Naive thymus-derived CD8-positive, alpha-beta T cell (primary cell): ENCODE measurements at regions of chr17 and their contacts with region 1.

Region 1: GRCh38 chr17:45051060-45051719 is at the start of gene DCAKD:
- DNase-seq: peak; percentile 79 to 92 (median 86)
- ATAC-seq: peak; percentile 88 to 94
- H3K4me3 Mint-ChIP-seq: peak within 1 kb of the TSS; percentile 87 to 97 (median 92)
- H3K27ac Mint-ChIP-seq: peak within 1 kb of the TSS; percentile 90 to 99 (median 97)
- H3K4me1 Mint-ChIP-seq: peaks cover 10 to 49% (median 44%) of the 10 kb centered on the region in 4 donors
- H3K27me3 Mint-ChIP-seq: no peaks in the 10 kb centered on the region
- polyA plus RNA-seq, gene DCAKD: 13.1 to 16.1 (median 16.0) TPM

Region 2: DNA sequence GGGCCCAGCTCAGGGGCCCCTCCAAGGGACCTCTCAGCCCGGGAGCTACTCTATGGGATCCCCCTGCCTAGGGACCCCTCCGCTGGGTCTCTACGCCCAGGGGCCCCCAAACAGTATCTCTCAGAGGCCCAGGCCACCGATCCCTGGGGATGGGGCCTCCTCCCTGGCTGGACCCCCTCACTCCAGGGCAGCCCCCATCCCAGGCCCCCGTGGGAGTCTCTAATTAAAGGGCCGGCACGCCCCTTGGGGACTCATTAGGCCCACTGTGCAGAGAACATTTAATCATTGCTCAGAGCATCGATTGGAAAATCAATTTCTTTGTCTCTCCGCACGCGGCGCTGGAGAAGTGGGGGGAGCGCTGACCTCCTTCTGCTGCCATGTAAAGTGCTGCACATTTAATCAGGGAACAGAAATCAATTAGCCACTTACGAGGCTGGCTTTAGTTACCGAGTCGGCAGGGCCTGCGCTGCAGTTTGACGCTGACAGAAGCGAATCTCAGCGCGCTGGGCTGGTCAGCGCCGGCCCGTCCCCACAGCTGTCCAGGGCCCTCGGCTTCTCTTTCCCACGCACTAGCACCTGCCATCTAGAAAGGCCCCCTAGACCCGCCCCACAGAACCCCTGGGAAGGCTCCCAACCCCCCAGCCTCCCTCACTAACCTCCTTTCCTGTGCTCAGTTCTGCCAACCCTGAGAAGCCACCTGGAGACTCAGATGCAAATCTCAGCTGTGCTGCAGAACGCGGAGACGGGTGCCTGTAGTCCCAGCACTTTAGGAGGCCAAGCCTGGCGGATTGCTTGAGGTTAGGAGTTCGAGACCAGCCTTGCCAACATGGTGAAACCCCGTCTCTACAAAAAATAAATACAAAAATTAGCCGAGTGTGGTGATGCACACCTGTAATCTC is 62.9 kb before region 1 on chr17:
- POLR2A ChIA-PET with region 1: no interaction called
- DNase-seq: no peak
- ATAC-seq: no peak
- H3K4me3 Mint-ChIP-seq: peak overlapping the region in 5 of 10 donors; percentile 10 to 73 (median 13)
- H3K27ac Mint-ChIP-seq: no peak overlapping the region
- H3K4me1 Mint-ChIP-seq: peaks cover 4 to 19% (median 12%) of the 10 kb centered on the region in 4 donors
- H3K27me3 Mint-ChIP-seq: peaks cover 12 to 46% (median 32%) of the 10 kb centered on the region in 5 donors

Region 3: DNA sequence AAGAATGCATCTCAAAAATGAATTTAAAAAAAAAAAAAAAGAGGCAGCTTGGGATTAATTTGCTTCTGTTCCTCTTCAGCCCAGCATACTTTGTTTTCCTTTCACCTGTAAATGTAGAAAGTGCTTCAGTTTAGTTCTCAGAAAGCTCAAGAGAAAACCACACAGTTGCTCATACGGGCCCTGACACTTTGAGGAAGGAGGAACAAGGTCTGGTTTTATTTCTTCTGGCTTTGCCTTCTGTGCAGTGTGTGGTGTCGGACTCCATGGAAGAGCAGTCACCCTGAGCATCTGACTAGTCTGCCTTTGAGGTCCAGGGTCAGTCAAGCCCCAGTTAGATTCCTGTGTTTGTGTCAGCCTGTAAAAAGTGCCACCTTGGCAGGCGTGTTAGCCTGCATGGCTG is 37.6 kb after region 1 on chr17:
- POLR2A ChIA-PET with region 1: no interaction called
- DNase-seq: no peak
- ATAC-seq: no peak
- H3K4me3 Mint-ChIP-seq: no peak overlapping the region
- H3K27ac Mint-ChIP-seq: peak overlapping the region in 3 of 10 donors; percentile 29 to 43 (median 42)
- H3K4me1 Mint-ChIP-seq: peaks cover 0 to 3% (median 0%) of the 10 kb centered on the region in 4 donors
- H3K27me3 Mint-ChIP-seq: no peaks in the 10 kb centered on the region

Region 4: DNA sequence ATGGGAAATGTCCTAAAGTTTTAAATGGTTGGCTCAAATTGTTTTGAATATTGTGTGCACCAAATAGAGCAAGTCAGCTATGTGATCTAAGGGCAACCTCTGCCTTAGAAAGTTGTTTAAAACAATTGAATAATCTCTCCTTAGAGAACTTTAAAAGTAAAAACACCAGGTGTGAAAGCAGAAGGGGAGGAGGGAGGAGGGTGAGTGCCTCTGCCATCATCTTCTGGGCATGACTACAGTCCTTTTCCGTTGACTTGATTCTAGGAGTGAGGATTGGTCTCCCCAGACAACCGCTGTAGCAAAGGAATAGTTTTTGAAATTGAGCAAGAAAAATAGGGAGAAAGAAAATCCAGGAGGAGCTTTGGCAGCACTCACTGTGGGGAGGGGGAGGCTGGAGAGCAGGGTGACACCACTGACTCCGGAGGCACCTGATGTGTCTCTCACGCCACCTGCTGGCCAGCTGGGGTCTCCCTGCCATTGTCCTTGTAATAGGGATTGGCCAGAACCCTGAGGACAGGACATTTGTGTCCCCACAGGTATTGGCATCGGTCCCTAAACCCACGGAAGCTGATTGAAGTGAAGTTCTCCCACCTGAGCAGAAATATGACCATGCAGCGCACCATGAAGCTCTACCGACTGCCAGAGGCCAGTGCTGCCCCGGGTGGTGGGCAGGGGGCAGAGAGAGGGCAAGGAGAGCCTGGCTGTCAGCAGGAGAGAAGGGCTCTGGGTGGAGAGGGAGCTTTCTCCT is 47.9 kb after region 1 on chr17:
- POLR2A ChIA-PET with region 1: interaction called, 10 read pairs
- DNase-seq: peak; percentile 51 to 85 (median 69)
- ATAC-seq: peak; percentile 89 to 90
- H3K4me3 Mint-ChIP-seq: no peak overlapping the region
- H3K27ac Mint-ChIP-seq: peak overlapping the region in 9 of 10 donors; percentile 28 to 73 (median 43)
- H3K4me1 Mint-ChIP-seq: peaks cover 0 to 10% (median 2%) of the 10 kb centered on the region in 4 donors
- H3K27me3 Mint-ChIP-seq: no peaks in the 10 kb centered on the region